ENCODE measurements at regions of chr7 and their contacts with region 1.

Region 1: GRCh38 chr7:149809215-149809614 is 29.0 kb upstream of the ZNF862 start:
- DNase-seq: no peak
- ATAC-seq: no peak
- H3K4me3 ChIP-seq: no peak overlapping the region
- H3K27ac ChIP-seq: no peak overlapping the region
- H3K4me1 ChIP-seq: no peaks in the 10 kb centered on the region
- H3K27me3 ChIP-seq: no peaks in the 10 kb centered on the region
- CTCF ChIP-seq: no peak
- POLR2A ChIP-seq: no peak
- RAD21 ChIP-seq: no peak

Region 2: DNA sequence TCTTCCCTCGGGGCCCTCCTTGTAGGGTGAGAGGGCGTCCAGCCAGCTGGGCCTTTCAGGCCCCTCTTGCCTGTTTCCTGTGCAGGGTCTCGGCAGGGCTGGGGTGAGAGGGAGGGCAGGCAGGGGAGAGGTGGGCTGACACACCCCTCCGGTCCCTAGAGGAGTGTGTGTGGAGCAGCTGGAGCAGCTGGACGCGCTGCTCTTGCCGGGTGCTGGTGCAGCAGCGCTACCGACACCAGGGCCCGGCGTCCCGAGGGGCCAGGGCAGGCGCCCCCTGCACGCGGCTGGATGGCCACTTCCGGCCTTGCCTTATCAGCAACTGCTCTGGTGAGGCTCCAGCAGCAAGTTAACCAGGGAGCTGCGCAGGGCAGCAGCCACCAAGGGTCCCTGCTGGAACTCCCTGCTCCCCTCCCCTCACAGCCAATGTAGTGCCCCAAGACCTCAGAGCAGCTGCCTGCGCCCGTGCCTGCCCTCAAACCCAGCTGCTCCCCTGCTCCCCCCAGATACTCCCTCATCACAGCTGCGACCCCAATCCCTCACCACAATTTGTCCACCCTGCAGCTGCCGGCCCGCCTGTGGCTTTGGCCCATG is 13.2 kb after region 1 on chr7:
- CTCF ChIA-PET with region 1: no interaction called
- POLR2A ChIA-PET with region 1: no interaction called
- RAD21 ChIA-PET with region 1: no interaction called
- intact Hi-C with region 1: no loop called
- DNase-seq: no peak
- ATAC-seq: no peak
- H3K4me3 ChIP-seq: no peak overlapping the region
- H3K27ac ChIP-seq: no peak overlapping the region
- H3K4me1 ChIP-seq: no peaks in the 10 kb centered on the region
- H3K27me3 ChIP-seq: no peaks in the 10 kb centered on the region
- CTCF ChIP-seq: no peak
- POLR2A ChIP-seq: no peak
- RAD21 ChIP-seq: no peak

Region 3: DNA sequence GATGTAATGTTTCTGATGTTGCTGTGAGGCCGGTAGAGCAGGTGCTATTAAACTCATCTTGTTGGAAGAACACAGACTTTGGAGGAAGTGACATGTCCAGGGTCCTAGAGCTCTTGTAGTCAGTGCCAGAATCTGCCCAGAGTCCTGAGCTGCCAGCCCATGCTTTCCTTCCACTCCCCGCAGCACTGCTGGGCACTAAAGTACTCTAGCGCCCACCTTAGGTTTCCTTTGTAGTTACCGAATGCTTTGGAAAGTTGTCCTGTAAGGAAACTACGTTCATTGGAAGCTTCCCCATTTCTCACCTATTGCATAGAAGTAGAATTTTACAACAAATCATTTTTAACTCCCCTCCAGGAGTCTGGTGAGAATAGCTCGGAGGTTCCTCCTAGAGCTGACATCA is 40.0 kb after region 1 on chr7:
- CTCF ChIA-PET with region 1: interaction called, 12 read pairs
- POLR2A ChIA-PET with region 1: no interaction called
- RAD21 ChIA-PET with region 1: no interaction called
- intact Hi-C with region 1: no loop called
- DNase-seq: no peak
- ATAC-seq: no peak
- H3K4me3 ChIP-seq: no peak overlapping the region
- H3K27ac ChIP-seq: no peak overlapping the region
- H3K4me1 ChIP-seq: peaks cover 6 to 10% of the 10 kb centered on the region in 2 experiments
- H3K27me3 ChIP-seq: no peaks in the 10 kb centered on the region
- CTCF ChIP-seq: peak in 2 of 3 experiments; percentile 7 to 23; a peak in 2 of 6 replicates
- POLR2A ChIP-seq: no peak
- RAD21 ChIP-seq: peak; percentile 49